Activated CD8-positive, alpha-beta T cell treated with anti-CD3 and anti-CD28 coated beads for 36 hours (primary cell): ENCODE measurements at regions of chr5 and their contacts with region 1.

Region 1: DNA sequence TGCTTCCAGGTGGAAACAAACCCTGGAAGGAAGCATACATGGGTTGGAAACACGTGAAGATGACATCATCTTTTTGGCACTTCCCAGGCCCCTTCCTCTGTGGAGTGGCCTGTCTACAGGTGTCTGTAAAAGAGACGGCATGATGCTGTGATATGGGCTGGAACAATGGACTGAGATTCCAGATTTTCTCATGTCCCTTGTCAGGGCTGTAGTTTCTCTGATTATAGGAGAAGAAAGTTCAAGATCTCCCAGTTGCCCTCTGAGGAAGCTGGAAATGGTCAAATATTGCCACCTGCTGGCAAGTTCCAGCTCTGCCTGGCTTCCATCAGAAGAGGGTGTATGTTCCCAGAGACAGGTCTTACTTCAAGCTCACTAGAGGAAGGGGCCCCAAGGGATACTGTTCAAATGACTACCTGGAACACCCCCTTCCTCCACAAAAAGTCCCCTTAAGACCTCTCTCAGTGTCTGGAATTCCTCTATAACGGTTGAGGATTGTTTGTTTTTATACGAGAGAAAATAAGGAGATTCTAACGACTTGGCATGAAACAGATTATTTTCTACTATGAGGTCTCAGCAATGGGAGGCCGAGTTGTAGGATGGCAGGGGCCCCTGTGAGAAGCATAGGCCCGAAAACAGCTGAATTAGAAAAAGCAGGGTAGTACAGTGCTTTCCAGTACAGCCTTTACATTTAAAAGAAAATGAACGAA is 7.3 kb upstream of the ANXA6 start:
- DNase-seq: peak; percentile 89
- ATAC-seq: peak; percentile 97
- H3K4me3 Mint-ChIP-seq: no peak overlapping the region
- H3K27ac Mint-ChIP-seq: no peak overlapping the region
- H3K4me1 Mint-ChIP-seq: peaks cover 17% of the 10 kb centered on the region
- H3K27me3 Mint-ChIP-seq: no peaks in the 10 kb centered on the region
- CTCF ChIP-seq: peak; percentile 92

Region 2: GRCh38 chr5:151093476-151093889 is 71.4 kb before region 1 on chr5:
- CTCF ChIA-PET with region 1: interaction called, 20 read pairs
- POLR2A ChIA-PET with region 1: no interaction called
- intact Hi-C with region 1: no loop called
- DNase-seq: no peak
- ATAC-seq: peak; percentile 15
- H3K4me3 Mint-ChIP-seq: peak overlapping the region; percentile 61
- H3K27ac Mint-ChIP-seq: peak overlapping the region; percentile 93
- H3K4me1 Mint-ChIP-seq: peaks cover 68% of the 10 kb centered on the region
- H3K27me3 Mint-ChIP-seq: peaks cover 4% of the 10 kb centered on the region
- CTCF ChIP-seq: no peak

Region 3: GRCh38 chr5:151141535-151141934 is 23.3 kb before region 1 on chr5:
- CTCF ChIA-PET with region 1: interaction called, 49 read pairs
- POLR2A ChIA-PET with region 1: interaction called, 4 read pairs
- intact Hi-C with region 1: no loop called
- DNase-seq: peak; percentile 90
- ATAC-seq: peak; percentile 91
- H3K4me3 Mint-ChIP-seq: peak overlapping the region; percentile 73
- H3K27ac Mint-ChIP-seq: peak overlapping the region; percentile 86
- H3K4me1 Mint-ChIP-seq: peaks cover 88% of the 10 kb centered on the region
- H3K27me3 Mint-ChIP-seq: no peaks in the 10 kb centered on the region
- CTCF ChIP-seq: no peak

Region 4: DNA sequence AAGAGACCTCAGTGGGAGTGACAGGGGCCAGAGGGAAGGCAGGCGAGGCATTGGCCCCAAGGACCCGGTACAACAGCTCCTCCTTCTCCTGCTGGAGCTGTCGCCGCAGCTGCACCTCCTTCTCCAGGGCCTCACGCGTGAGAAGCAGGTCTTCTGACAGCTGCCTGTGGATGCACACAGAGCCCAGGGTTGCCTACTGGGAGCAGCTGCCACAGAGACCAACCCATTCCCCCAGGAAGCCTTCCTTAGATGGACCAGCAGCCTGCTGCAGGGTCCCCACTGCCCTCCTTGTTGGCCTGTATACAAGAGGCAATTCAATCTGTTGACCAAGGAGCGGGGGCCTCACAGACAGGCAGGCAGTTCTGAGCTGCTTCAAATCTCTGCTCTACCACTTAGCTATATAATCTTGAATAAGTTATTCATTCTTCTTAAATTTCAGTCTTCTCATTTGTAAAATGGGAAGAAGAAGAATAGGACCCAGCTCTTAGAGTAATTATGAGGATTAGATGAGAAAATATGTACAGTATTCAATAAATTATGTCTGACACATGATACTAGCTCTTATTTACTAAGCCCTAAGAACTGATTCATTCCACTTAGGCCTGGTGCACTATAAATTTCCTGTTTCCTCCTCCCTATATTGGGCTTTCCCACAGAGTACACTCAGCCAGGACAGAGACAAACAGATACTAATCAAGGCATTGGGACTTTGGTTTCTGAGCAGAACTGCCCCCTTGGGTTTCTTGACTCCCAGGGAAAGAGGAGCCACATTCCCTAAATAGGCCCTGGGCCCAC is 18.8 kb after region 1 on chr5:
- CTCF ChIA-PET with region 1: interaction called, 19 read pairs
- POLR2A ChIA-PET with region 1: interaction called, 4 read pairs
- intact Hi-C with region 1: no loop called
- DNase-seq: no peak
- ATAC-seq: no peak
- H3K4me3 Mint-ChIP-seq: no peak overlapping the region
- H3K27ac Mint-ChIP-seq: peak overlapping the region; percentile 27
- H3K4me1 Mint-ChIP-seq: peaks cover 2% of the 10 kb centered on the region
- H3K27me3 Mint-ChIP-seq: no peaks in the 10 kb centered on the region
- CTCF ChIP-seq: no peak

Region 5: DNA sequence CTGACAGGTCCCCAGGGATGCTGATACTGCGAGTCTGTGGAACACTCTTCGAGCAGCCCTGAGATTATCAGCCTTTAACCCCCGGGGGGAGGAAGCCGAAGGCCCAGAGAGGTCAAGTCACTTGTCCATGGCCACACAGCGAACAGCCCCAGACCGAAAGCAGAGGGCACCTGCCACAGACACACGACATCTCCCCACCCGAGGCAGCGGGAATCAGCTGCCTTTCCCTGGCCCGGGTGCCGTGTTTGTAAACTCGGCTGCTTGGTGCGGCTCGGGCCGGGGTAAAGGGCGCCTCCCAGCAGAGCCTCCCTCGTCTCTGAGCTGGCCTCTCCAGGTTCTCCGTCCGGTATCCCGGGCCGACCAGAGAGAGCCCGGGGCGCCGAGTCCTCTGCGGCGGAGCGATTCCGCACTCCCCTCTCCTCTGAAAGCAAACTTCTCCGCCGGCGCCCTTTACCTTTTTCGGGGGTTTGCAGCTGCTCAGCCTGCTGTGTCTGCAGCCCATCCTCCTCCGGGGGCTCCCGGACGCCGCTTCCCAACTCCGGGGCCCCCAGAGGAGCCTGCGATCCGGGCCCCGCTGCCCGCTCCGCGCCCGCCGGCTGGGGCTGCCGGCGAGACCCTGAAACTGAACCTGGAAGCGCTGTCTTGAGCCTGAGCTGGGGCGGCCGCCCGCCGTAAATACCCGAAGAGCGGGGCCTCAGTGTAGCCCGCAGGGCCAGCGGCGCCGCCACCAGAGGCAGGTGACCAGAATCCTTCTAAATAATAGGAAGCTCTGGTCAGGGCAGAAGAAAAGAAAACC is 58.8 kb after region 1 on chr5 and contains the start of gene CCDC69:
- CTCF ChIA-PET with region 1: interaction called, 17 read pairs
- POLR2A ChIA-PET with region 1: interaction called, 3 read pairs
- intact Hi-C with region 1: no loop called
- DNase-seq: peak; percentile 75
- ATAC-seq: peak; percentile 52
- H3K4me3 Mint-ChIP-seq: peak within 1 kb of the TSS; percentile 92
- H3K27ac Mint-ChIP-seq: peak within 1 kb of the TSS; percentile 94
- H3K4me1 Mint-ChIP-seq: peaks cover 55% of the 10 kb centered on the region
- H3K27me3 Mint-ChIP-seq: no peaks in the 10 kb centered on the region
- CTCF ChIP-seq: no peak
- total RNA-seq, gene CCDC69: 33.0 to 34.5 TPM